ENCODE measurements at regions of chr1 and their contacts with region 1.

Region 1: DNA sequence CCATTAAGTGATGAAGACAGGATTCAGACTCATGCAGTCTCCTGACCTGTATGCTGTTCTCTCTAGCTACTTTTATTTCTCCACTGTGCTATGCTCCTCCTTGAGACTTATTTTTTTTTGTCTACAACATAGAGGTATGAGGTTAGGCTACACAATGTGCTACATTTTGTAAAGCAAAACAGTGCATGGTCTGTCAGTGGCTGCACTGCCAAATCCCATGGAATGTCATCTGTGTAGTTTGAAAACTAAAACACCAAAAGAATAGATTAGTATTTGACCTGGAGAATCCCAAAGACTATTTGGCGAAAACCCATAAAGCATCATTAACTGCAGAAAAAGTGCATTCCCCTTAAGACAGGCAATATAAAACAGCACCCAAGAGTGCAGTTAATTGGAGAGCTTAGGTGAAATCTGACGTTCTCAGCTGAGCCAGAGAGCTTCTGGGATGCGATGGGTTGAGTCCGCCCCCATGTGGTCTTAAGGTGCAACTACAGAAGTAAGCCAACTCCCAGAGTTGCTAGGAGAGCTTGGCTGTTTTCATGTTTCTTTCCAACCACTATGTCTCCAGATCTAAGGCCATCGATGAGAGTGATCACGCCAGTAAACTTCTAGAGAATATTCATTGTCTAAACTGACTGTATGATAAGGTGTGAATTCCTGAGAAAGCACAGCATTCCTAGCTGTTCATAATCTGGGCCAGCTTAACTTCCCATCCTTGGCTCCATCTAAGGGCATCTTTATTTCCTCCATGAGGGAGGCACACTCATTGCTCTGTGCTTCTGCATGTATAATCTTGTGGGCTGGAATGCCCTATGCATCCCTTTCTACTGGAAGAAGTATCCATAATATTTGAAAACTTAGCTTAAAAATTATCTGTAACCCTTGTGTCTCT is 20.7 kb upstream of the CYP2J2 start:
- DNase-seq: peak in 3 of 4 donors; percentile 44 to 76 (median 52)
- ATAC-seq: peak; percentile 99
- H3K4me3 ChIP-seq: no peak overlapping the region
- H3K27ac ChIP-seq: no peak overlapping the region
- H3K4me1 ChIP-seq: no peaks in the 10 kb centered on the region
- H3K27me3 ChIP-seq: no peaks in the 10 kb centered on the region
- CTCF ChIP-seq: peak; percentile 76 to 87

Region 2: GRCh38 chr1:59266180-59266926 is 680.9 kb before region 1 on chr1:
- intact Hi-C with region 1: no loop called
- DNase-seq: no peak
- ATAC-seq: peak; percentile 64
- H3K4me3 ChIP-seq: no peak overlapping the region
- H3K27ac ChIP-seq: peak overlapping the region in 1 of 2 donors; percentile 34
- H3K4me1 ChIP-seq: no peaks in the 10 kb centered on the region
- H3K27me3 ChIP-seq: no peaks in the 10 kb centered on the region
- CTCF ChIP-seq: no peak

Region 3: GRCh38 chr1:59879574-59879973 is 67.7 kb before region 1 on chr1:
- intact Hi-C with region 1: loop called in 1 of 2 experiments (anchors 5 kb)
- DNase-seq: peak in 3 of 4 donors; percentile 45 to 79 (median 46)
- ATAC-seq: peak; percentile 99
- H3K4me3 ChIP-seq: no peak overlapping the region
- H3K27ac ChIP-seq: no peak overlapping the region
- H3K4me1 ChIP-seq: no peaks in the 10 kb centered on the region
- H3K27me3 ChIP-seq: no peaks in the 10 kb centered on the region
- CTCF ChIP-seq: peak; percentile 39 to 49

Region 4: DNA sequence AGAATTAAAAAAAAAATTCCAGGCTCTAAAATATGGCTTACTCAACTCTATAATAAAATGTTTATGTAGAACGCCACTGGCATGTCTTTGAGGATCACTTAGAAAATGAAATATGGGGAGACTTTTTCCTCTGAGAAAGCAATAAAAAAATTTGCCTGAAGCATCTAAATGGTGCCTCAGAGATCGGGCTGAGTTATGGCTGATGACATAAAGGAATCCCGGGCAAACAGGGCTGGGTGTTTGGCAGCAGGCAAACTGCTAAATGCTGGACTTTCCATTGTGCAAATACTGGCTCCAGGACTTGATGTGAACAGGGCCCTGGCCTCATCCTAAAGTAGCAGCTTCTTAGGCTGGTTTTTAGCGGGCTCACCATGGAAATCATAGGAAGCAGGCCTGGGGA is 170.8 kb after region 1 on chr1:
- intact Hi-C with region 1: no loop called
- DNase-seq: no peak
- ATAC-seq: no peak
- H3K4me3 ChIP-seq: no peak overlapping the region
- H3K27ac ChIP-seq: no peak overlapping the region
- H3K4me1 ChIP-seq: no peaks in the 10 kb centered on the region
- H3K27me3 ChIP-seq: no peaks in the 10 kb centered on the region
- CTCF ChIP-seq: no peak

Measured in left lung (tissue), 14 donors.